Activated CD4-positive, alpha-beta memory T cell treated with anti-CD3 and anti-CD28 coated beads for 36 hours (primary cell): ENCODE measurements at regions of chr4 and their contacts with region 1.

Region 1: GRCh38 chr4:163544407-163545038 is 50.0 kb downstream of the TMA16 start:
- DNase-seq: peak; percentile 72
- H3K4me3 Mint-ChIP-seq: no peak overlapping the region
- H3K27ac Mint-ChIP-seq: no peak overlapping the region
- H3K4me1 Mint-ChIP-seq: peaks cover 3% of the 10 kb centered on the region
- H3K27me3 Mint-ChIP-seq: no peaks in the 10 kb centered on the region

Region 2: DNA sequence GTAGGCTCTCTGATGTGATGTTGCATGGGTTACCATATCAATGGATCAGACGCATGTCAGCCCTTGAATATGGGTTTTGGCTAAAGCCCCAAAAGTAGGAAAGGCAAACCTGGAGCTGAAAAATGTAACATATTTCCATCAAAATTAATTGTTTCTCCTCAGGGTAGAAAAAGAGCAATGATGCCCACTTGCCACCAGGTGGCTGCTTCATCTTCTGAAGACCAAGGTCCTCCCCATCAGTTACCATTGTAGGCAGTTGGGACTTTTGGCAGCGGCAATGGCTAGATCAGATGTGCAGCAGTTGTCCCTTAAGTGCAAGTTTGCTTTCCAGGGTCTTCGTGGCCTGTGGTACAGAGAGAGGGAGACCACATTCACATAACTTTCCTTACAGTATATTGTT is 496.1 kb before region 1 on chr4:
- CTCF ChIA-PET with region 1: no interaction called
- POLR2A ChIA-PET with region 1: no interaction called
- intact Hi-C with region 1: loop called (anchors 1 kb)
- DNase-seq: peak; percentile 13
- H3K4me3 Mint-ChIP-seq: no peak overlapping the region
- H3K27ac Mint-ChIP-seq: no peak overlapping the region
- H3K4me1 Mint-ChIP-seq: no peaks in the 10 kb centered on the region
- H3K27me3 Mint-ChIP-seq: peaks cover 2% of the 10 kb centered on the region

Region 3: GRCh38 chr4:163166041-163166579 is 378.4 kb before region 1 on chr4:
- CTCF ChIA-PET with region 1: interaction called, 3 read pairs
- POLR2A ChIA-PET with region 1: no interaction called
- intact Hi-C with region 1: loop called (anchors 2 kb)
- DNase-seq: peak; percentile 71
- H3K4me3 Mint-ChIP-seq: peak overlapping the region; percentile 75
- H3K27ac Mint-ChIP-seq: peak overlapping the region; percentile 93
- H3K4me1 Mint-ChIP-seq: peaks cover 41% of the 10 kb centered on the region
- H3K27me3 Mint-ChIP-seq: no peaks in the 10 kb centered on the region

Region 4: GRCh38 chr4:163251204-163251603 is 293.3 kb before region 1 on chr4:
- CTCF ChIA-PET with region 1: no interaction called
- POLR2A ChIA-PET with region 1: no interaction called
- intact Hi-C with region 1: no loop called
- DNase-seq: no peak
- H3K4me3 Mint-ChIP-seq: no peak overlapping the region
- H3K27ac Mint-ChIP-seq: no peak overlapping the region
- H3K4me1 Mint-ChIP-seq: no peaks in the 10 kb centered on the region
- H3K27me3 Mint-ChIP-seq: peaks cover 5% of the 10 kb centered on the region

Region 5: GRCh38 chr4:163356104-163356503 is 188.4 kb before region 1 on chr4:
- CTCF ChIA-PET with region 1: no interaction called
- POLR2A ChIA-PET with region 1: no interaction called
- intact Hi-C with region 1: no loop called
- DNase-seq: no peak
- H3K4me3 Mint-ChIP-seq: no peak overlapping the region
- H3K27ac Mint-ChIP-seq: no peak overlapping the region
- H3K4me1 Mint-ChIP-seq: no peaks in the 10 kb centered on the region
- H3K27me3 Mint-ChIP-seq: peaks cover 3% of the 10 kb centered on the region

Region 6: DNA sequence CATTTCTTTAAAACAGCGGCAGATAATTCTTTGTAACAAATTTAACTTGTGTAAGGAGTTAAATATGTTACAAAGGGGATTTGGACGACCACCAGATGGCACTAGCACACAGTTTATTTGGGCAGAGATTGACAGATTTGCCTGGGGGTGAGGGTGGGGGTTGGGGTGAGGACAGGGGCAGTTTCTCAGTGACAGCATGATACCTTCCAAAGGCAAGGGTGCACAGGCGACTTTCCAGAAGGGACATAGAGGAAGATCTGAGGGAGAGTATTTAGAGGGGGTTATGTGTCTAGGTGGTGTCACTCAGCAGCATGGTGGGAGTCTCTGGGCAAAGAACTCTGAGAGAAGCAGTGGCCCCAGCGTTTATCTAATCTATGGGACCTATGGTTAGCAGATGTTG is 59.6 kb before region 1 on chr4:
- CTCF ChIA-PET with region 1: interaction called, 34 read pairs
- POLR2A ChIA-PET with region 1: no interaction called
- intact Hi-C with region 1: loop called (anchors 1 kb)
- DNase-seq: peak; percentile 60
- H3K4me3 Mint-ChIP-seq: no peak overlapping the region
- H3K27ac Mint-ChIP-seq: no peak overlapping the region
- H3K4me1 Mint-ChIP-seq: peaks cover 1% of the 10 kb centered on the region
- H3K27me3 Mint-ChIP-seq: peaks cover 4% of the 10 kb centered on the region

Region 7: GRCh38 chr4:163681208-163681821 is 136.8 kb after region 1 on chr4:
- CTCF ChIA-PET with region 1: interaction called, 133 read pairs
- POLR2A ChIA-PET with region 1: no interaction called
- intact Hi-C with region 1: no loop called
- DNase-seq: no peak
- H3K4me3 Mint-ChIP-seq: no peak overlapping the region
- H3K27ac Mint-ChIP-seq: no peak overlapping the region
- H3K4me1 Mint-ChIP-seq: no peaks in the 10 kb centered on the region
- H3K27me3 Mint-ChIP-seq: no peaks in the 10 kb centered on the region